Activated B cell treated with CpG ODN at 0.5 μM for 24 hours (primary cell): ENCODE measurements at regions of chr11 and their contacts with region 1.

Region 1: GRCh38 chr11:119095066-119095880 is 6.4 kb downstream of the DPAGT1 start:
- DNase-seq: peak; percentile 96
- ATAC-seq: peak; percentile 87
- H3K4me3 Mint-ChIP-seq: peak overlapping the region; percentile 92
- H3K27ac Mint-ChIP-seq: peak overlapping the region; percentile 89
- H3K4me1 Mint-ChIP-seq: peaks cover 50% of the 10 kb centered on the region
- H3K27me3 Mint-ChIP-seq: no peaks in the 10 kb centered on the region
- CTCF ChIP-seq: no peak

Region 2: DNA sequence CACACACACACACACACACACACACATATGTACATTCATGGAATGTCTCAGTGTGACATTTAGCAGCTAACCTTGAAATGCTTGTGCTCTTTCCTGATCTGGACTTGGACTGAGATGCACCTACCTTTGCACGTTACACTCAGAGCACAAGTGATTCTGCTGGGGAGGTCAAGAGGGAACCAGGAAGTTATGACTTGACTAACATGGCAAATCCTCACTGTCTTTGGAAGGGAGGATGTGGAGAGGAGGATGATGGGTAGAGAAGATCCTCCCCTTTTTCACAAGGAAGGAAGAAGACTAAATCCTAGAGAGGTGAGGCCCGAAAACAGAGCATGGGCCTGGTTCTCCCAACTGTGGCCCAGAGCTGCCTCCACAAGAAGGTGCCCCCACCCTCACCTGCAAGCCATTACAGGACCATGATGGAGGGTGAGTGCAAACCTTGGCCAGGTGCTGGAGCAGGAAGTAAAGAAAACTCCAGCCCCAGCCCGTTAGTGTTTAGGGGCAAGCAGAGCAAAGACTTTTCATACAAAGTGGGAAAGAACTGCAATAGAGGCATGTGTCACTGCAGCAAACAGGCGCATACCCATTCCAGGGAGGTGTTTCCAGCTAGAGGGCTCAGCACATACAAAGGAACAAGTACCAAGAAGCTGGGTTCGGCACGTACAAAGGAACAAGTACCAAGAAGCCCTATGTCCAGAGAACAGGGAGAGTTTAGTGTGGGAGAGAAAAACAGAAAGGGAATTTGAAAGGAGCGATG is 969.0 kb before region 1 on chr11:
- CTCF ChIA-PET with region 1: no interaction called
- POLR2A ChIA-PET with region 1: no interaction called
- intact Hi-C with region 1: no loop called
- DNase-seq: no peak
- ATAC-seq: no peak
- H3K4me3 Mint-ChIP-seq: no peak overlapping the region
- H3K27ac Mint-ChIP-seq: no peak overlapping the region
- H3K4me1 Mint-ChIP-seq: no peaks in the 10 kb centered on the region
- H3K27me3 Mint-ChIP-seq: peaks cover 12% of the 10 kb centered on the region
- CTCF ChIP-seq: no peak

Region 3: DNA sequence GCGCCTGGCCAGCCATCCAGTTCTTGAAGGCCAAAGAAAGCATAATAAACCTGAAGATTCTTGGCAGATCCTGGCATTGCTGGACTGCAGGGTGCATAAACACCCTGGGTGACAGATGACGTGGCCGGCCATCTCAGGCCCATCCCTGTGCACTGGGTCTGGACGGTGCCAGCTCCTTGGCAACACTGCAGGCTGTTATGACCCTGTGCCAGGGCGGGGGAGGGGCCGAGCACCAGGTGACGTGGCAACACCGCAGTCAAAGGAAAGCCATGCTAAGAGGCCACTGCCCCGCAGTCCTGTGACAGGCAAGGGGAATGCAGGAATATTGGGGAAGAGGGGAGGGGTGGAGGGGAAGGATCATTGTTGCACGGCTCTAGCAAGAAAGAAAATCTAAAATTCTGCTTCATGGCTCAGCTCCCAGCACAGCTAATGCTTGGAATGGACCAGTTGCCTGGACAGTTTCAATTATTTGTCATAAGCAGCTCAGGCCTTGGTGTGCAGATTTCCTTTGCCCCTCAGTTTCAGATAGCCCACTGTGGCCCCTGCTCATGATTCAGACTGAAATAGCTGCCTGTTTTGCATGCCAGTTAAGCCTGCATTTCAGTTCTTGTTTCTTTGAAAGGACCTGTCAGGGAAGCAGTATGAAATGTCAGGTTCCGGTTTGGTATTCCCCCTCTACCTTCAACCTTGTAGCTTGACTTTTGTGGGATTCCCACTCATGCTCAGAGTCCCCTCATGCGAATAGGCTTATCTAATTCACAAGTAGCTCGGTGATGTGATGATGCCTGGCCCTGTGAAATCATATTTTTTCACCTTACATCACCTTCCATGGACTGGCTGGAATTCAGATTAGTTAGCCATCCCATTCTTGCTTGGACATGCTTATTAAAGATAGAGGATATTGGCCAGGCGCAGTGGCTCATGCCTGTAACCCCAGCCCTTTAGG is 274.6 kb before region 1 on chr11:
- CTCF ChIA-PET with region 1: no interaction called
- POLR2A ChIA-PET with region 1: no interaction called
- intact Hi-C with region 1: no loop called
- DNase-seq: peak; percentile 51
- ATAC-seq: peak; percentile 85
- H3K4me3 Mint-ChIP-seq: peak overlapping the region; percentile 77
- H3K27ac Mint-ChIP-seq: peak overlapping the region; percentile 97
- H3K4me1 Mint-ChIP-seq: peaks cover 73% of the 10 kb centered on the region
- H3K27me3 Mint-ChIP-seq: no peaks in the 10 kb centered on the region
- CTCF ChIP-seq: no peak

Region 4: DNA sequence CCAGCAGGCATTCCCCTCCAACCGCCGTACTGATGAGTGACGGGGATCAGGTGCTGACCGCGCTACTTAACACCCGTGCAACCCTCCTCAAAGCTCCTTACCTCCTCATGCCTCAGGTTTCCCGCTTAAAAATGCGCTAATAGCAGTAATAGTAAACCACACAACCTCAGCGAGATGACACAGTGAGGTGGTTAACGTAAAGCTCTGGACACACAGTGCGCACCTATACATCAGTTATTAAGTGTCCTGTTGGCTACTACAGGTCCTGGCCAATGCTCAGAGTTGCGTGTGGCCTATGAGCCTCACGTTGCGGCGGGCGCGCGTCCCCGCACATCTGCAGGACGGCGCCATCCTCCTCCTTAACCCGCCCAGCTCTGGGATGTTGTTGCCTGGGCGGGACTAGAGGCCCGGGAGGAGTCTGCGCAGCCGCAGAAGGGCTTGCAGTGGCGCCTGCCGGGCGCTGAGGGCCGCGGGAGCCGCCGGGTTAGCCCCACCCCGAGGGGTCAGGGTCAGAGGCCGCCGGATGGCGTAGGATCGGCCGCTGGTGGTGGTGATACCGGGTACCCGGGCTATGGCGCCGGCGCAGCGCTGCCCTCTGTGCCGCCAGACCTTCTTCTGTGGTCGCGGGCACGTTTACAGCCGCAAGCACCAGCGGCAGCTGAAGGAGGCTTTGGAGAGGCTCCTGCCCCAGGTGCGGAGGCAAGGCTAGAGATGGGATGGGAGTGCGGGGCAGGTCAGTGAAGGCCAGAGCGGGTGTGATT is 97.5 kb before region 1 on chr11 and contains the start of gene CENATAC:
- CTCF ChIA-PET with region 1: no interaction called
- POLR2A ChIA-PET with region 1: interaction called, 4 read pairs
- intact Hi-C with region 1: loop called (anchors 1 kb)
- DNase-seq: peak; percentile 91
- ATAC-seq: peak; percentile 95
- H3K4me3 Mint-ChIP-seq: peak within 1 kb of the TSS; percentile 95
- H3K27ac Mint-ChIP-seq: peak within 1 kb of the TSS; percentile 91
- H3K4me1 Mint-ChIP-seq: peaks cover 32% of the 10 kb centered on the region
- H3K27me3 Mint-ChIP-seq: no peaks in the 10 kb centered on the region
- CTCF ChIP-seq: no peak
- total RNA-seq, gene CENATAC: 66.4 and 85.7 TPM in 2 replicates

Region 5: GRCh38 chr11:119030329-119031049 is 64.8 kb before region 1 on chr11 and contains the start of gene SLC37A4:
- CTCF ChIA-PET with region 1: no interaction called
- POLR2A ChIA-PET with region 1: interaction called, 3 read pairs
- intact Hi-C with region 1: loop called (anchors 1 kb)
- DNase-seq: peak; percentile 99
- ATAC-seq: peak; percentile 95
- H3K4me3 Mint-ChIP-seq: peak within 1 kb of the TSS; percentile 85
- H3K27ac Mint-ChIP-seq: peak within 1 kb of the TSS; percentile 61
- H3K4me1 Mint-ChIP-seq: peaks cover 15% of the 10 kb centered on the region
- H3K27me3 Mint-ChIP-seq: no peaks in the 10 kb centered on the region
- CTCF ChIP-seq: no peak
- total RNA-seq, gene SLC37A4: 12.0 and 12.1 TPM in 2 replicates

Region 6: GRCh38 chr11:119057000-119057769 is 38.1 kb before region 1 on chr11 and contains the start of gene HYOU1:
- CTCF ChIA-PET with region 1: no interaction called
- POLR2A ChIA-PET with region 1: interaction called, 18 read pairs
- intact Hi-C with region 1: loop called (anchors 1 kb)
- DNase-seq: peak; percentile 97
- ATAC-seq: peak; percentile 94
- H3K4me3 Mint-ChIP-seq: peak within 1 kb of the TSS; percentile 96
- H3K27ac Mint-ChIP-seq: peak within 1 kb of the TSS; percentile 95
- H3K4me1 Mint-ChIP-seq: peaks cover 40% of the 10 kb centered on the region
- H3K27me3 Mint-ChIP-seq: no peaks in the 10 kb centered on the region
- CTCF ChIP-seq: no peak
- total RNA-seq, gene HYOU1: 120 and 122 TPM in 2 replicates

Region 7: GRCh38 chr11:119121008-119121810 is 25.9 kb after region 1 on chr11 and contains the start of gene HINFP:
- CTCF ChIA-PET with region 1: interaction called, 9 read pairs
- POLR2A ChIA-PET with region 1: interaction called, 40 read pairs
- intact Hi-C with region 1: loop called (anchors 1 kb)
- DNase-seq: peak; percentile 97
- ATAC-seq: peak; percentile 97
- H3K4me3 Mint-ChIP-seq: peak within 1 kb of the TSS; percentile 94
- H3K27ac Mint-ChIP-seq: peak within 1 kb of the TSS; percentile 92
- H3K4me1 Mint-ChIP-seq: peaks cover 30% of the 10 kb centered on the region
- H3K27me3 Mint-ChIP-seq: no peaks in the 10 kb centered on the region
- CTCF ChIP-seq: no peak
- total RNA-seq, gene HINFP: 47.8 and 62.6 TPM in 2 replicates

Region 8: DNA sequence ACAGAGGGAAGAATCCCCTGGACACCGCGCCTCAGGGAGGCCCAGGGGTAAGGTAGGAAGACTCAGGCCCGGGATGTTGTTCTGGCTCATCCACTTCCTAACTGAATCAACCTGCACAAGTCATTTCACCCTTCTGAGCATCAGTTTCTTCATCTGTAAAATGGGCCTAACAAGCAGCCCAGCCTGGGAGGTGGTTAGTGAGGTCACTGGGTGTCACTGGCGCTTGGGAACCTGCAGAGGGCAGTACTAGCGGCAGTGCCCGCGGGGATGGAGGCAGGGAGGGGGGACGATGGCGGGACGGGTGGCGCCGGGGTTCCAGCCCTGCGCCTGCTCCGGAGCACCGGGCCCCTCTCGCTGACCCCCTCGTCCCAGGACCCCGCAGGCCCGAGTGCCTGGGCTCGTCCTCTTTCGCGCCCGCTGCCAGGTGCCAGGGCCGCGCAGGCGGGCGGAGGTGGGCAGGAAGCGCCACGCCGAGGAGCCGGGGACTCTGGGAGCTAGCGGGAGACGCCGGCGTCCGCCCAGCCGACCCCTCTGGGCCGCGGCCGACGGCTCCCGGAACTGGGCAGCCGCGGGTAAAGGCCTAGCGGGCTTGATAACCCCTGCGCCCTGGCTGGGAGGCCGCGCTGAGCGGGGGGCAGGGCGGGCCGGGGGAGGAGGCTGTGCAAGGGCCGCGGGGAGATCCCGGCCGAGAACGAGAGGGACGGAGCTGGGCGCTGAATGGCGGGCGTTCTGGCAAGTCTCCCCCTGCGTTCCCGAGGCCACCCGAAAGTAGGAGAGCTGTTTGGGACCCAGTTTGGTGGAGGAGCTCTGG is 73.4 kb after region 1 on chr11 and contains the start of gene NLRX1:
- CTCF ChIA-PET with region 1: no interaction called
- POLR2A ChIA-PET with region 1: interaction called, 7 read pairs
- intact Hi-C with region 1: loop called (anchors 1 kb)
- DNase-seq: peak; percentile 74
- ATAC-seq: peak; percentile 97
- H3K4me3 Mint-ChIP-seq: peak within 1 kb of the TSS; percentile 86
- H3K27ac Mint-ChIP-seq: peak within 1 kb of the TSS; percentile 50
- H3K4me1 Mint-ChIP-seq: peaks cover 5% of the 10 kb centered on the region
- H3K27me3 Mint-ChIP-seq: no peaks in the 10 kb centered on the region
- CTCF ChIP-seq: peak; percentile 69
- total RNA-seq, gene NLRX1: 9.8 TPM in 2 replicates